CD4-positive, alpha-beta memory T cell (primary cell): ENCODE measurements at regions of chr17 and their contacts with region 1.

Region 1: GRCh38 chr17:38853292-38854219 is at the start of gene RPL23:
- DNase-seq: peak; percentile 90 to 94 (median 92)
- H3K4me3 ChIP-seq: peak within 1 kb of the TSS; percentile 75 to 81
- H3K4me3 Mint-ChIP-seq: peak within 1 kb of the TSS; percentile 88 to 97 (median 95)
- H3K27ac ChIP-seq: peak within 1 kb of the TSS; percentile 87
- H3K27ac Mint-ChIP-seq: peak within 1 kb of the TSS; percentile 97 to 100 (median 99)
- H3K4me1 ChIP-seq: peaks cover 34% of the 10 kb centered on the region
- H3K4me1 Mint-ChIP-seq: peaks cover 30 to 45% (median 37%) of the 10 kb centered on the region in 4 donors
- H3K27me3 ChIP-seq: no peaks in the 10 kb centered on the region
- H3K27me3 Mint-ChIP-seq: no peaks in the 10 kb centered on the region
- total RNA-seq, gene RPL23: 1,511 to 1,572 TPM

Region 2: GRCh38 chr17:38752119-38752929 is 101.2 kb before region 1 on chr17 and contains the start of gene PSMB3:
- CTCF ChIA-PET with region 1: no interaction called
- POLR2A ChIA-PET with region 1: interaction called, 15 read pairs
- intact Hi-C with region 1: loop called (anchors 5 kb)
- DNase-seq: peak; percentile 95 to 99 (median 97)
- H3K4me3 ChIP-seq: peak within 1 kb of the TSS; percentile 81 to 94
- H3K4me3 Mint-ChIP-seq: peak within 1 kb of the TSS; percentile 95 to 100 (median 99)
- H3K27ac ChIP-seq: peak within 1 kb of the TSS; percentile 84
- H3K27ac Mint-ChIP-seq: peak within 1 kb of the TSS; percentile 93 to 100 (median 98)
- H3K4me1 ChIP-seq: peaks cover 57% of the 10 kb centered on the region
- H3K4me1 Mint-ChIP-seq: peaks cover 25 to 57% (median 43%) of the 10 kb centered on the region in 4 donors
- H3K27me3 ChIP-seq: peaks cover 24% of the 10 kb centered on the region
- H3K27me3 Mint-ChIP-seq: peaks cover 7 to 16% of the 10 kb centered on the region in 2 donors
- total RNA-seq, gene PSMB3: 93.5 to 99.0 TPM

Region 3: GRCh38 chr17:38824899-38825761 is 28.4 kb before region 1 on chr17 and contains the start of gene CWC25:
- CTCF ChIA-PET with region 1: interaction called, 6 read pairs
- POLR2A ChIA-PET with region 1: interaction called, 90 read pairs
- intact Hi-C with region 1: loop called (anchors 1 kb)
- DNase-seq: peak; percentile 94 to 99 (median 97)
- H3K4me3 ChIP-seq: peak within 1 kb of the TSS; percentile 71 to 89
- H3K4me3 Mint-ChIP-seq: peak within 1 kb of the TSS; percentile 94 to 99 (median 98)
- H3K27ac ChIP-seq: peak within 1 kb of the TSS; percentile 98
- H3K27ac Mint-ChIP-seq: peak within 1 kb of the TSS; percentile 99 to 100 (median 100)
- H3K4me1 ChIP-seq: peaks cover 23% of the 10 kb centered on the region
- H3K4me1 Mint-ChIP-seq: peaks cover 15 to 42% (median 30%) of the 10 kb centered on the region in 4 donors
- H3K27me3 ChIP-seq: no peaks in the 10 kb centered on the region
- H3K27me3 Mint-ChIP-seq: peaks cover 0 to 5% of the 10 kb centered on the region in 2 donors
- total RNA-seq, gene CWC25: 44.4 to 46.8 TPM

Region 4: GRCh38 chr17:38893607-38894006 is 40.1 kb after region 1 on chr17:
- CTCF ChIA-PET with region 1: no interaction called
- POLR2A ChIA-PET with region 1: interaction called, 42 read pairs
- intact Hi-C with region 1: loop called (anchors 2 kb)
- DNase-seq: peak in 1 of 5 donors; percentile 50
- H3K4me3 ChIP-seq: no peak overlapping the region
- H3K4me3 Mint-ChIP-seq: peak overlapping the region in 5 of 8 donors; percentile 12 to 59 (median 23)
- H3K27ac ChIP-seq: peak overlapping the region; percentile 50
- H3K27ac Mint-ChIP-seq: peak overlapping the region; percentile 66 to 90 (median 78)
- H3K4me1 ChIP-seq: peaks cover 95% of the 10 kb centered on the region
- H3K4me1 Mint-ChIP-seq: peaks cover 57 to 96% (median 77%) of the 10 kb centered on the region in 4 donors
- H3K27me3 ChIP-seq: no peaks in the 10 kb centered on the region
- H3K27me3 Mint-ChIP-seq: no peaks in the 10 kb centered on the region

Region 5: DNA sequence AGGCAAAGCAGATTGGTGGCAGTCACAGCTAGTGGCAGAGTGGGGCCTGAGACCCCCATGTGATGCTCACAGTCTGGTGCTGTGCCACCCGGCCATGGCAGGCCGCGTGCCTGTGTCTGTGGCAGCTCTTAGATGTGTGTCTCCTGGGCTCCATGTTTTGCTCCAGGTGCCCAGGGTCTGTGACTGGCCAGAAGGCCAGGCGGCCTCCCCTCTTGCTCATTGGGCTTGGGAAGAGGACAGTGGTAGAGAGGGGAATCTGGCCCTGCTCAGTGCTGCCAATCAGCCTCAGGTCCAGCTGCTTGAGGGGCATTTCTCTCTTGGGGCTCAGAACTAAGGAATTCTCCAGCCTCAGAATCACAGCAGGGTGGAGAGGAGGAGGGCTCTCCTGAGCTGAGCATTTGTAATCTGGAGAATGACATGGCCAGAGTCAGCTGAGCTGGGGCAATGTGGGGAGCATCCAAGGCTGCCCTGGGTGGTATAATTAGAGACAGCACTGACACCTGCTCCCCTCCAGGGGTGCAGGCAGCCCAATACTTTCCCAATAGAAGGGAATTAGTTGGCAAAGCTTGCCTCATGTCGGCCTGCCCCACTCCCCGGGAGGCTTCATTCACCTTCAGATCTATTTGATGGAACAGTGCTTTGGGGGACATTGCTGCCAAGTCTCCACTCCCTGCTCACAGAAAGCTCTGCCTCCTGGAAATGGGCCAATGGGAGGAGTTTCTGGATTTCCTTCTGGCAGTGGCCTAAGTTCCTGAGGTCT is 69.2 kb after region 1 on chr17:
- CTCF ChIA-PET with region 1: interaction called, 10 read pairs
- POLR2A ChIA-PET with region 1: interaction called, 24 read pairs
- intact Hi-C with region 1: no loop called
- DNase-seq: no peak
- H3K4me3 ChIP-seq: no peak overlapping the region
- H3K4me3 Mint-ChIP-seq: no peak overlapping the region
- H3K27ac ChIP-seq: no peak overlapping the region
- H3K27ac Mint-ChIP-seq: peak overlapping the region in 1 of 7 donors; percentile 17
- H3K4me1 ChIP-seq: peaks cover 19% of the 10 kb centered on the region
- H3K4me1 Mint-ChIP-seq: peaks cover 24 to 32% (median 29%) of the 10 kb centered on the region in 4 donors
- H3K27me3 ChIP-seq: no peaks in the 10 kb centered on the region
- H3K27me3 Mint-ChIP-seq: no peaks in the 10 kb centered on the region

Region 6: GRCh38 chr17:38943607-38944006 is 90.1 kb after region 1 on chr17:
- CTCF ChIA-PET with region 1: no interaction called
- POLR2A ChIA-PET with region 1: no interaction called
- intact Hi-C with region 1: no loop called
- DNase-seq: no peak
- H3K4me3 ChIP-seq: no peak overlapping the region
- H3K4me3 Mint-ChIP-seq: no peak overlapping the region
- H3K27ac ChIP-seq: no peak overlapping the region
- H3K27ac Mint-ChIP-seq: no peak overlapping the region
- H3K4me1 ChIP-seq: no peaks in the 10 kb centered on the region
- H3K4me1 Mint-ChIP-seq: no peaks in the 10 kb centered on the region
- H3K27me3 ChIP-seq: no peaks in the 10 kb centered on the region
- H3K27me3 Mint-ChIP-seq: no peaks in the 10 kb centered on the region

Region 7: DNA sequence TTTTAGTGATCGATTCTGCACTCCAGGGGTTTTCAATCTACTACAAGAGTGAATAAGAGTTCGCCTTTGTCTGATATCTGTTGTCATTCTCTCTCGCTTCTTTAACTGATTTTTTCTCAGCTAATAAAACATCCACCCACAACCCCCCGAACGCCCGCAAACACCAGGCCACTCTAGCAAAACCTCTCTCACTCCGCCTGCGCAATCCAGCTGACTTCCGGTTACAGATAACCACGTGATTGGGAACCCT is 346.2 kb after region 1 on chr17:
- CTCF ChIA-PET with region 1: no interaction called
- POLR2A ChIA-PET with region 1: interaction called, 16 read pairs
- intact Hi-C with region 1: no loop called
- DNase-seq: peak in 4 of 5 donors; percentile 92 to 94 (median 92)
- H3K4me3 ChIP-seq: peak overlapping the region; percentile 77 to 93
- H3K4me3 Mint-ChIP-seq: peak overlapping the region; percentile 86 to 98 (median 96)
- H3K27ac ChIP-seq: peak overlapping the region; percentile 98
- H3K27ac Mint-ChIP-seq: peak overlapping the region; percentile 96 to 100 (median 100)
- H3K4me1 ChIP-seq: peaks cover 58% of the 10 kb centered on the region
- H3K4me1 Mint-ChIP-seq: peaks cover 37 to 73% (median 58%) of the 10 kb centered on the region in 4 donors
- H3K27me3 ChIP-seq: no peaks in the 10 kb centered on the region
- H3K27me3 Mint-ChIP-seq: no peaks in the 10 kb centered on the region